Testis (tissue), 5 donors: ENCODE measurements at regions of chr5 and their contacts with region 1.

Region 1: GRCh38 chr5:172764849-172765765 is 5.9 kb downstream of the DUSP1 start:
- DNase-seq: peak; percentile 99
- H3K4me3 ChIP-seq: peak overlapping the region; percentile 15 to 47
- H3K27ac ChIP-seq: peak overlapping the region; percentile 100
- H3K4me1 ChIP-seq: peaks cover 20% of the 10 kb centered on the region
- H3K27me3 ChIP-seq: no peaks in the 10 kb centered on the region
- CTCF ChIP-seq: peak in 1 of 3 experiments; percentile 11
- POLR2A ChIP-seq: no peak

Region 2: DNA sequence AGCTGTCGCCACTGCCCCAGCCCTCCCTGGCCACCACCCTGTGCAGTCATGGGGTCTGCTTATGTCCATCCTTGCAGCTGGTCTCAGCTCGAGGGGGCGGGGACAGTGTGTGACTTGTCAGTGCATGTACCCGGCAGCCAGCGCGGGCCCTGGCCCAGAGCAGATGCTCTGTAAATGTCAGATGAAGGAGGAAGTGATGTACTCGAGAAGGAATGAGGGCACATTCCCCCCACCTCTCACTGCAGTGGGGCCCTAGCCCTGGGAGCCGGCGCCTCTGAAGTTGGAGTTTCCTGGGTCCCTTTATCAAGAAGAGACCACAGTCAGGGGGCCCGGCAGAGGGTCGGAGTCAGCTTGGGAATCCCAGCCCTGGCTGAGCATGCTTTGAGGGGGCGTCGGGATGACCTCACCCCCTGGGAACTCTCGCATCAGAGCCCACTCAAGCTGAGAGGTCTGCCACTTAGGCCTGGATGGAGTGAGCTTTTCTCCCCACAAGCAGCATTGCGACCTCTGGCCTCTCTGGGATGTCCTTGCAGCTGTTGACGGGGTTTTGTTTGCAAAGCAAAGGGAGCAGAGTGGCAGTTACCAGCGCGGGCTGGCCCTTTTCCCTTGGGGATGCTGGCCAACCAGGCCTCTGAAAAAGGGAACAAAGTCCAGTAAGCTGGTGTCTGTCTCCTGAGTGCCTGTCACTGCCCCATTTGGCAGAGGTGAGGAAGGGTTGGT is 105.0 kb before region 1 on chr5:
- intact Hi-C with region 1: no loop called
- DNase-seq: peak; percentile 77
- H3K4me3 ChIP-seq: no peak overlapping the region
- H3K27ac ChIP-seq: peak overlapping the region; percentile 37 to 55
- H3K4me1 ChIP-seq: peaks cover 32% of the 10 kb centered on the region
- H3K27me3 ChIP-seq: no peaks in the 10 kb centered on the region
- CTCF ChIP-seq: no peak
- POLR2A ChIP-seq: no peak

Region 3: DNA sequence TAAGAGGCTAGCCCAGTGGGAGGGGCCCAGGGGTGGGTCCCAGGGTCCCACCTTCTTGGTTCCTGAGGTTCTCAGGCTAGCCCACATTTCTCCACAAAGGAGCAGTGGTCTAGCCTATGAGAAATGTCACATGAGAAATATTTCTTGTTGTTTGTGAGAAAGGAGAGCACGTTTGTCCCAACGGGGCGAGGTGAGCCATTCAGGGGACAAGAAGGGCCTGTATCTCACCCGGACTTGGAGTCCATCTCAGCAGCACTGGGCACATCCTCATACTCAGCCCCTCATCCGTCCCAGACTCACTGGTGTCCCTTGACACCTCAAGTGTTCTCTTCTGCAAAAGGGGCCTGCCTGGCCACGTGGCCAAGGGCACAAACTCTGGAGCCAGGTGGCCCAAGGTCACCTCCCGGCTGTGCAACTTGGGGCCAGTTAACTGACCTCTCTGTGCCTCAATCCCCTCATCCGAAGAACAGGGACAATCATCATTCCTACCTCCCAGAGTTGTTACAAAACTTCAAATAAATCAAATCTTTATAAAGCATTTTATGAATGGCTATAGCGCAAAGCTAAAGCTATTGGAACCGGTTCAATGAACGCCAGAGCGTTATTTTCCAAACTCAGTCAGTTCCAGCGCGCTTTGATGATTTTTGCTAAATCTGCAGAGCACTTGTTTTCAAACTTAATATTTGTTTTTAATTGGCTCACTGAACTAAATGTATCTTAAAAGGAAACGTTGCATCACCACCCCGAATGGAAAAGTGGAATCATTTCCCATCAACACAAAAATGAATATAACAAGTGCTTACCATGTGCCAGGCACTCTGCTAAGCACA is 43.6 kb before region 1 on chr5:
- intact Hi-C with region 1: loop called (anchors 5 kb)
- DNase-seq: peak; percentile 30
- H3K4me3 ChIP-seq: no peak overlapping the region
- H3K27ac ChIP-seq: peak overlapping the region in 1 of 2 donors; percentile 18
- H3K4me1 ChIP-seq: peaks cover 11% of the 10 kb centered on the region
- H3K27me3 ChIP-seq: no peaks in the 10 kb centered on the region
- CTCF ChIP-seq: no peak
- POLR2A ChIP-seq: no peak

Region 4: DNA sequence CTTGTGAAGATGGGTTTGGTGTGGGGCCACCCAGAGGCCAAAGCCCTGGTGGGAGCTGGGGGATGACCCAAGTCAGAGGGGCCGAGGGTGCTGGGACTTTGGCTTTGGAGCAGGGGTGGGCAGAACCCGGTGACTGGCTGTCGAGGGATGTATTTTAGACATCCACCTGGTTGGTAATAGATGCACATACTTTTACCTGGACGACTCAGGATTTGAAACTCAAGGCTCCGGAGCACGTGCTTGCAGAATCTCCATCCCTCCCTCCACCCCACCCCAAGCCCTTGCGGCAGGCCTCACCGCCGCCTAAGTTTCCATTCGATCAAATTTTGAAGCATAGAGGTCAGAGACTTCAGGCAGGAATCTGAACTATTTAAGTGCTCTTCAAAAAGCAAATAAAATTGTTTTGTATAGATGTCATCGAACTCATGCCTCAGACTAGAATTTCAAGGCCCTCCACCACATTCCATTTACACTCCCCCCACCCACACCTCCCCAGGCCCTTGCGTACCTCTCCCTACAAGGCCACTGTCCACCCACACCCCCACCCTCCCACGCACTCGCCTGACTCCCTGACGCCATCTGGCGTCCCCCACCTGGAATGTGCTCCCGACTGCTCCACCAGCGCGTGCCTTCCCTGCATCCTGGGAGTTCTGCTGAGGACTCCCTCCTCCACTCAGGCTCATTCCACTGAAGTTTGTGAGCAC is 137.5 kb after region 1 on chr5:
- intact Hi-C with region 1: loop called (anchors 5 kb)
- DNase-seq: peak; percentile 93
- H3K4me3 ChIP-seq: no peak overlapping the region
- H3K27ac ChIP-seq: peak overlapping the region; percentile 91 to 92
- H3K4me1 ChIP-seq: peaks cover 58% of the 10 kb centered on the region
- H3K27me3 ChIP-seq: no peaks in the 10 kb centered on the region
- CTCF ChIP-seq: peak; percentile 21 to 47 (median 45)
- POLR2A ChIP-seq: no peak